BJ (cell line): ENCODE measurements at regions of chr3 and their contacts with region 1.

Region 1: DNA sequence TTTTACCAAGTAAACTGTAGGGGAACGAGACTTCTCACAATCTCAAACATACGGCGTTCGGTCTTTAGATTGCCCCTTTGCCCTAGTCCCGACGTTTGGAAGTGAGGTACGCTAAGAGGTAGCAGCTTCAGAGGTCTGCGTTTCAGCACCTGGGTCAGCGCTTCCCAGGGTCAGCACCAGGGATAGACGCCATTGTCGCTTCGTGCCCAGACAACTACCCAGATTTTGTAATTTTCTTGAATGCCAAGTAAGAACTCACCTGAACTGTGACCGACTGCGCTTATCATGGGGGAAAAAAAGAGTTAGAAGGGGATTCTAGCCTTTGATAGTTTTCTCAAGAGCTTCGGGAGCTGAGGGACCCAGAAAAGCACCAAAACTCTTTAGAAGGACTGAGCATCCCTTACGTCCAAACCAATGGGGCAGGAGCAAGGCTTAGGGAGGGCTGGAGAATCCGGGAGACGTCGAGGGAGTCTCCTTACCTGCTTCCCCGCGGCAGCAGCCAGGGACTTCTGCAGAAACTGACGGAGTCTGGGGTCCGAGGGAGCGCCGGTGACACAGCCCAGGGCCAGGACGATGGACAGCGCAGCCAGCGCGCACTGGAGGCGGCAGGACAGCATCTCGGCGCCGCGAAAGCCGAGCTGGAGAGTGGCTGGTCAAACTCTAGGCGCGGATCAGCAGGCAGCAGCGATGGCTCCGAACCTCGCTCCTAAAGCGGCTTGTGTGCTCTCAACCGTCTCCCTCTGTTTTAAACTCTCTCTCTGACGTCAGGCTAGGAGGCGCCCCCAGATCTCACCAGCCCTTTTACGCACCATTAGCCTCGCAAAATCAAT is at the start of gene SST:
- DNase-seq: no peak
- H3K4me3 ChIP-seq: no peak within 1 kb of the TSS
- H3K27me3 ChIP-seq: peaks cover 3% of the 10 kb centered on the region
- CTCF ChIP-seq: no peak
- polyA plus RNA-seq, gene SST: 0.15 and 0.25 TPM in 2 replicates

Region 2: GRCh38 chr3:187616307-187616972 is 53.5 kb before region 1 on chr3:
- CTCF ChIA-PET with region 1: interaction called, 12 read pairs
- POLR2A ChIA-PET with region 1: no interaction called
- DNase-seq: no peak
- H3K4me3 ChIP-seq: no peak overlapping the region
- H3K27me3 ChIP-seq: no peaks in the 10 kb centered on the region
- CTCF ChIP-seq: peak; percentile 81